A549 (cell line): ENCODE measurements at regions of chr15 and their contacts with region 1.

Region 1: GRCh38 chr15:55434989-55435825 is 26.9 kb downstream of the PIERCE2 start:
- DNase-seq: peak; percentile 64 to 71
- ATAC-seq: peak; percentile 96 to 97
- H3K4me3 ChIP-seq: no peak overlapping the region
- H3K27ac ChIP-seq: no peak overlapping the region
- H3K4me1 ChIP-seq: peaks cover 4% of the 10 kb centered on the region; the same call in 1 of the 3 replicates
- CTCF ChIP-seq: peak; percentile 78
- EP300 ChIP-seq: no peak
- POLR2A ChIP-seq: no peak
- RAD21 ChIP-seq: peak; percentile 82 to 84

Region 2: DNA sequence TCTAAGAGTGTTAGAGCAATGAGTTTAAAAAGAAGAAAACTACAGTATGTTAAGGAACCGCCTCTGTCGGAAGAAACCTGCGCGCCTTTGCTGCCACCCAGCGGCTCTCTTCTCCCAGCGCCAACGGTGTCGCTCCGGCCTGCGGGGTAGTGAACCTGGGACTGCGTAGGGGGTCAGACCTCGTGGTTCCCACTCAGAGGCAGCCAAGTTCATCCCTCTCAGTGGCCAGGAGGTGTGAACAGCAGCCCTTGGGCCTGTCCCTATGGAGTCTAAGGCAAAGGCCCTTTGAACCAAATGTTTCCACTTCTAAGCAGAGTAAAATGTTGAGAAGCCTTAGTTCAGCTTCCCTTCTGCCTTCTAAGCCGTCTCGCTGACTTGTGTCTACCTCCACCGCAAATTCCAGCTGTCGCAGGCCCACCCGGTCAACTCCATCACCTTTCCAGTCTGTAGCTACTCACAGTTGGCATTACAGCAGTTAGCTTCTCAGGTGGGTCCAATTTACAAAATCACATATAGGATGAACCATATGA is 144.6 kb before region 1 on chr15:
- CTCF ChIA-PET with region 1: interaction called, 11 read pairs
- POLR2A ChIA-PET with region 1: no interaction called
- DNase-seq: peak; percentile 81 to 86
- ATAC-seq: peak; percentile 87 to 94
- H3K4me3 ChIP-seq: peak overlapping the region; percentile 83
- H3K27ac ChIP-seq: peak overlapping the region; percentile 83 to 88
- H3K4me1 ChIP-seq: peaks cover 4% of the 10 kb centered on the region; the same call in 1 of the 3 replicates
- CTCF ChIP-seq: peak; percentile 98
- EP300 ChIP-seq: no peak
- POLR2A ChIP-seq: no peak
- RAD21 ChIP-seq: peak; percentile 92 to 99

Region 3: DNA sequence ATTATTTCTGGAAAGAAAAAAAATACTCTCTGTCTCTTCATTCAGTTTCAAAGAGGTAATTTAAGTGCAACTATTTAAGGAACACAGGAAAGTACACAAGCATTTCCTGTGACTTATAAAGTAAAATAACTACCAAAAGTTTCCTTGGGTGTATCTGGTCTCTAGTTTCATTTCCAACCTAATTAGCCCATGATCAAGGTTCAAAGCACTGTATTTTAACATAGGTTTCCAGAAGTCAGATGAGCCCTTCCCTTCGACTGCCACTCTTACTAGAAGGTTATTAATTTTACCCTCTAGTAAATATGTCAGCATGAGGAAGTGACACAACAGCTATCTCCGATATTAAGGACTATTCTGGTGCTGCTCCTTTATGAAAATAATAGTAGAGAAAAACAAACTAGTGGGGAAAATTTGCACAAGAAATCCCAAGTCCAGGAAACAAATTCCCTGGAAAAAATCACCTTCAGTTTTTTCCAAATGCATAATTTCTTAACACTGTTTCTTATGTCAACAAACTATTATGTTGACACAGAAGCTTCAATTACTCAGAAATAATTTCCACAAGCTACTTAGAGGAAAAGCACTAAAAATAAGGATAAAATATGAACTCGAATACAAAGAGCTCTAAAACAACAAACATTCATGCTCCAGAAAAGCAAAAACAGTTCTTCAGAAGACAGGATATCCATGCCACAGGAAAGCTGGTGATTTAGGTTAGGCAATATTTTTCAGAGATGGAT is 62.3 kb before region 1 on chr15:
- CTCF ChIA-PET with region 1: interaction called, 12 read pairs
- POLR2A ChIA-PET with region 1: no interaction called
- DNase-seq: no peak
- ATAC-seq: no peak; a peak in 1 of 6 replicates
- H3K4me3 ChIP-seq: no peak overlapping the region
- H3K27ac ChIP-seq: no peak overlapping the region
- H3K4me1 ChIP-seq: peaks cover 19% of the 10 kb centered on the region
- CTCF ChIP-seq: no peak
- EP300 ChIP-seq: no peak
- POLR2A ChIP-seq: no peak
- RAD21 ChIP-seq: no peak

Region 4: GRCh38 chr15:55420171-55420866 is 14.9 kb before region 1 on chr15:
- CTCF ChIA-PET with region 1: interaction called, 16 read pairs
- POLR2A ChIA-PET with region 1: no interaction called
- DNase-seq: no peak
- ATAC-seq: no peak
- H3K4me3 ChIP-seq: no peak overlapping the region
- H3K27ac ChIP-seq: no peak overlapping the region
- H3K4me1 ChIP-seq: no peaks in the 10 kb centered on the region
- CTCF ChIP-seq: no peak
- EP300 ChIP-seq: no peak
- POLR2A ChIP-seq: no peak
- RAD21 ChIP-seq: no peak

Region 5: GRCh38 chr15:55468321-55468720 is 33.1 kb after region 1 on chr15:
- CTCF ChIA-PET with region 1: interaction called, 12 read pairs
- POLR2A ChIA-PET with region 1: no interaction called
- DNase-seq: no peak
- ATAC-seq: no peak
- H3K4me3 ChIP-seq: no peak overlapping the region
- H3K27ac ChIP-seq: no peak overlapping the region
- H3K4me1 ChIP-seq: no peaks in the 10 kb centered on the region
- CTCF ChIP-seq: no peak
- EP300 ChIP-seq: no peak
- POLR2A ChIP-seq: no peak
- RAD21 ChIP-seq: no peak